ENCODE measurements at regions of chr3 and their contacts with region 1.

Region 1: GRCh38 chr3:183385698-183386613 is 42.5 kb downstream of the MCF2L2 start:
- DNase-seq: peak in 1 of 2 donors; percentile 33
- ATAC-seq: peak; percentile 79 to 88
- H3K4me3 ChIP-seq: no peak overlapping the region
- H3K27ac ChIP-seq: no peak overlapping the region
- H3K4me1 ChIP-seq: peaks cover 0 to 2% of the 10 kb centered on the region in 2 donors
- H3K27me3 ChIP-seq: no peaks in the 10 kb centered on the region
- CTCF ChIP-seq: peak; percentile 61 to 81 (median 79)
- POLR2A ChIP-seq: no peak

Region 2: DNA sequence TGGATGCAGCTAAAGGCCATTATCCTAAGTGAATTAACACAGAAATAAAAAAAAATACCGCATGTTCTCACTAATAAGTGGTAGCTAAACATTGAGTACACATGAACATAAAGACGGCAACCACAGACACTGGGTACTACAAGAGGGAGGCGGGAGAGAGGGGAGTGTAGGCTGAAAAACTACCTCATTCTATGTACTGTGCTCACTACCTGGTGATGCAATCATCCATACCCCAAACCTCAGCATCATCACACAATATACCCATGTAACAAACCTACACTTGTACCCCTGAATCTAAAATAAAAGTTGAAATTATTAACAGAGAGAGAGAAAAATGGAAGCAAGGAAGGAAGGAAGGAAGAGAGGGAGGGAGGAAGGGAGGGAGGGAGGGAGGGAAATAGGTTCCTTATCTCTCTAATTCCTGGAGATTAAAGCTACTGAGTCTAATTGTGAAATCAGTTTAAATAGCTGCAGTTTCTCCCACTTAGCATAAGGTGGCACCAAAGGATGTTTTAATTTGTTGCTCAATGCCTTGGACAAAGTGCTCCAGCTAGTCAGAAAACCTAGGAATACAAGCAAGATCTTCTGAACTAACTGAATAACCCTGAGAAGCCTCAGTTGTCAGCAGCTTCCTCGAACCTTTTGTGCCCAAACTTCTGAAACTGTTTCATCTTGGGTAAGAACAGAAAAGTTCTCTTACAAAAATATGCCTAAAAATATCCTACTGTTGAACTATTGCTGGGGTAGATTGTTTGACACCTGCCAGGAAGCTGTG is 672.0 kb before region 1 on chr3:
- in situ Hi-C with region 1: no loop called
- intact Hi-C with region 1: loop called (anchors 2 kb)
- DNase-seq: no peak
- ATAC-seq: peak; percentile 85 to 93
- H3K4me3 ChIP-seq: no peak overlapping the region
- H3K27ac ChIP-seq: no peak overlapping the region
- H3K4me1 ChIP-seq: no peaks in the 10 kb centered on the region
- H3K27me3 ChIP-seq: no peaks in the 10 kb centered on the region
- CTCF ChIP-seq: peak in 4 of 5 experiments; percentile 48 to 63 (median 56)
- POLR2A ChIP-seq: no peak

Region 3: DNA sequence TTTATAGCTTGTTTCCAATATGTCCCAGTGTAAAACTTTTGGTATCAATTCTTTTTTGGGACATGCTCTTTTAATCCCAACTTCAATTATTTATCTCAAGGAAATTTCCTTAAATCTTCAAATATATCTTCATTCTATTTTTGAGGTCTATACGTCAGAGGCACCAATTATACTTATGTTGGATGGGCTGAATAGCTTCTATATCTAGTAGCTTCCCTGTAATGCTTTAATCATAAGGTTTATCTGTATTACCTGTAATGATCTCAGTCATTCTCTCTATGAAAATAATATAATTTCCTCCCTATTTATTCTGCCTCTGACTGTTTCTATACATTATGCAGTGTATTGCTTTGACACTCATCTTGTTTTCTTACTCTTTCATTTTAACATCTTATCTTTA is 256.7 kb before region 1 on chr3:
- in situ Hi-C with region 1: loop called (anchors 5 kb)
- intact Hi-C with region 1: no loop called
- DNase-seq: no peak
- ATAC-seq: no peak
- H3K4me3 ChIP-seq: no peak overlapping the region
- H3K27ac ChIP-seq: no peak overlapping the region
- H3K4me1 ChIP-seq: no peaks in the 10 kb centered on the region
- H3K27me3 ChIP-seq: no peaks in the 10 kb centered on the region
- CTCF ChIP-seq: no peak
- POLR2A ChIP-seq: no peak

Region 4: GRCh38 chr3:183188895-183189462 is 197.0 kb before region 1 on chr3:
- in situ Hi-C with region 1: loop called (anchors 5 kb)
- intact Hi-C with region 1: loop called (anchors 1 kb)
- DNase-seq: no peak
- ATAC-seq: peak in 1 of 2 donors; percentile 26
- H3K4me3 ChIP-seq: no peak overlapping the region
- H3K27ac ChIP-seq: no peak overlapping the region
- H3K4me1 ChIP-seq: no peaks in the 10 kb centered on the region
- H3K27me3 ChIP-seq: no peaks in the 10 kb centered on the region
- CTCF ChIP-seq: no peak
- POLR2A ChIP-seq: no peak

Region 5: GRCh38 chr3:183252973-183253901 is 132.7 kb before region 1 on chr3 and contains the start of gene B3GNT5:
- in situ Hi-C with region 1: loop called (anchors 5 to 10 kb)
- intact Hi-C with region 1: loop called (anchors 1 kb)
- DNase-seq: peak; percentile 68 to 79
- ATAC-seq: peak; percentile 76 to 81
- H3K4me3 ChIP-seq: peak within 1 kb of the TSS; percentile 72 to 86 (median 81)
- H3K27ac ChIP-seq: peak within 1 kb of the TSS; percentile 88 to 98 (median 91)
- H3K4me1 ChIP-seq: peaks cover 19 to 24% of the 10 kb centered on the region in 2 donors
- H3K27me3 ChIP-seq: no peaks in the 10 kb centered on the region
- CTCF ChIP-seq: no peak
- POLR2A ChIP-seq: peak; percentile 58 to 61
- total RNA-seq, gene B3GNT5: 18.2 to 41.2 (median 26.0) TPM

Region 6: DNA sequence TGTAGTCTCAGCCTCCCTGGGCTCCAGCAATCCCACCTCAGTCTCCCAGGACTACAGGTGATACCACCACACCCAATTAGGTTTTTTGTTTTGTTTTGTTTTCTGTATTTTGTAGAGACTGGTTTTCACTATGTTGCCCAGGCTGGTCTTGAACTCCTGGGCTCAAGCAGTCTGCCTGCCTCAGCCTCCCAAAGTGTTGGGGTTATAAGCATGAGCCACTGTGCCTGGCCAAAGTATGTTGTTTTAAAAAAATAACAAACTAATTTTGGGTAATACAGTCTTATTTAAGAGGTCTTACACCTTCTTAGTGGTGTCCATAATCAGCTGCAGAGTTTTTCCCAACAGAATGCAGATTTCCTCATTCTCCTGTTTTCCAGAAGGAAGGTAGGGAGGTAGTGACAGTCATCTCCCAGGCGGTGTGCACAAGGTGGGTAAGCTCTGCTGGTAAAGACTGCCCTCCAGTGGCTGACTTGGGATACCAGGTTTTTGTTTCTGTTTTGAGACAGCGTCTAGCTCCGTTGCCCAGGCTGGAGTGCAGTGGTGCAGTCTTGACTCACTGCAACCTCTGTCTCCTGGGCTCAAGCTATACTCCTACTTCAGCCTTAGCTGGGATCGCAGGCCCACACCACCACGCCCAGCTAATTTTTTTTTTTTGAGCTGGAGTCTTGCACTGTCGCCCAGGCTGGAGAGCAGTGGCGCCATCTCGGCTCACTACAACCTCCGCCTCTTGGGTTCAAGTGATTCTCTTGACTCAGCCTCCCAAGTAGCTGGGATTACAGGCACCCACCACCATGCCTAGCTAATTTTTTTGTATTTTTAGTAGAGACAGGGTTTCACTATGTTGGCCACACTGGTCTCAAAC is 381.0 kb after region 1 on chr3:
- in situ Hi-C with region 1: no loop called
- intact Hi-C with region 1: loop called (anchors 5 kb)
- DNase-seq: peak; percentile 61 to 69
- ATAC-seq: peak; percentile 61 to 86
- H3K4me3 ChIP-seq: no peak overlapping the region
- H3K27ac ChIP-seq: peak overlapping the region in 2 of 4 donors; percentile 12 to 35
- H3K4me1 ChIP-seq: peaks cover 0 to 6% of the 10 kb centered on the region in 2 donors
- H3K27me3 ChIP-seq: no peaks in the 10 kb centered on the region
- CTCF ChIP-seq: peak; percentile 77 to 90 (median 83)
- POLR2A ChIP-seq: no peak